ENCODE measurements at regions of chr17 and their contacts with region 1.

Region 1: GRCh38 chr17:60599620-60600489 is at the start of gene PPM1D:
- DNase-seq: peak; percentile 99
- ATAC-seq: peak; percentile 94
- H3K4me3 Mint-ChIP-seq: peak within 1 kb of the TSS; percentile 92
- H3K27ac Mint-ChIP-seq: peak within 1 kb of the TSS; percentile 93
- H3K4me1 Mint-ChIP-seq: peaks cover 34% of the 10 kb centered on the region
- H3K27me3 Mint-ChIP-seq: no peaks in the 10 kb centered on the region
- total RNA-seq, gene PPM1D: 20.3 to 22.6 TPM

Region 2: GRCh38 chr17:60577147-60577915 is 22.5 kb before region 1 on chr17:
- CTCF ChIA-PET with region 1: interaction called, 18 read pairs
- DNase-seq: no peak
- ATAC-seq: peak; percentile 68
- H3K4me3 Mint-ChIP-seq: peak overlapping the region; percentile 73
- H3K27ac Mint-ChIP-seq: peak overlapping the region; percentile 69
- H3K4me1 Mint-ChIP-seq: peaks cover 9% of the 10 kb centered on the region
- H3K27me3 Mint-ChIP-seq: peaks cover 13% of the 10 kb centered on the region

Region 3: DNA sequence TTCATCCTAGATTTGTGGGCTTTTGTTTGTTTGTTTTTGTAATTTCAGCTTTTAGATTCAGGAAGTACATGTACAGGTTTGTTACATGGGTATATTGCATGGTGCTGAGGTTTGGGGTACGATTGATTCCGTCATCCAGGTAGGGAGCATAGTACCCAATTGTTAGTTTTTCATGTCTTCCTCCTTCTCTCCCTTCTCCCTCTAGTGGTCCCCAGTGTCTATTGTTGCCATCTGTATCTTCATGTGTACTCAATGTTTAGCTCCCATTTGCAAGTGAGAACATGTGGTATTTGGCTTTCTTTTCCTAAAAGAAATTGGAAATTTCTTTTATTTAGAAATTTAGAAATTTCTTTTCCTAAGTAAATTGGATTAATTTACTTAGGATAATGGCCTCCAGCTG is 40.6 kb after region 1 on chr17:
- CTCF ChIA-PET with region 1: interaction called, 12 read pairs
- DNase-seq: no peak
- ATAC-seq: no peak
- H3K4me3 Mint-ChIP-seq: no peak overlapping the region
- H3K27ac Mint-ChIP-seq: no peak overlapping the region
- H3K4me1 Mint-ChIP-seq: peaks cover 11% of the 10 kb centered on the region
- H3K27me3 Mint-ChIP-seq: no peaks in the 10 kb centered on the region